H1 (cell line): ENCODE measurements at regions of chr1 and their contacts with region 1.

Region 1: GRCh38 chr1:156677616-156678596 is 699 bp upstream of the NES start:
- DNase-seq: peak in 1 of 2 experiments; percentile 74
- H3K4me3 ChIP-seq: peak overlapping the region; percentile 64 to 84 (median 74); a peak in 5 of 8 replicates
- H3K27ac ChIP-seq: no peak overlapping the region
- H3K4me1 ChIP-seq: peaks cover 7 to 37% (median 30%) of the 10 kb centered on the region in 4 experiments
- H3K27me3 ChIP-seq: no peaks in the 10 kb centered on the region; a peak in 2 of 7 replicates
- CTCF ChIP-seq: peak in 2 of 3 experiments; percentile 92 to 97; a peak in 3 of 4 replicates
- EP300 ChIP-seq: no peak
- POLR2A ChIP-seq: no peak
- RAD21 ChIP-seq: peak; percentile 89 to 95

Region 2: GRCh38 chr1:156618853-156619581 is 58.9 kb before region 1 on chr1 and contains the start of gene HAPLN2:
- CTCF ChIA-PET with region 1: interaction called, 868 read pairs
- POLR2A ChIA-PET with region 1: interaction called, 46 read pairs
- DNase-seq: peak in 1 of 2 experiments; percentile 84
- H3K4me3 ChIP-seq: peak within 1 kb of the TSS in 1 of 4 experiments; percentile 32; a peak in 2 of 8 replicates
- H3K27ac ChIP-seq: no peak within 1 kb of the TSS
- H3K4me1 ChIP-seq: no peaks in the 10 kb centered on the region; a peak in 2 of 7 replicates
- H3K27me3 ChIP-seq: peaks cover 14 to 34% (median 27%) of the 10 kb centered on the region in 4 experiments
- CTCF ChIP-seq: peak; percentile 72 to 94 (median 92)
- EP300 ChIP-seq: no peak
- POLR2A ChIP-seq: no peak
- RAD21 ChIP-seq: peak; percentile 44 to 53
- total RNA-seq, gene HAPLN2: 0.19 TPM in 1 of 2 replicates, not detected in the other

Region 3: DNA sequence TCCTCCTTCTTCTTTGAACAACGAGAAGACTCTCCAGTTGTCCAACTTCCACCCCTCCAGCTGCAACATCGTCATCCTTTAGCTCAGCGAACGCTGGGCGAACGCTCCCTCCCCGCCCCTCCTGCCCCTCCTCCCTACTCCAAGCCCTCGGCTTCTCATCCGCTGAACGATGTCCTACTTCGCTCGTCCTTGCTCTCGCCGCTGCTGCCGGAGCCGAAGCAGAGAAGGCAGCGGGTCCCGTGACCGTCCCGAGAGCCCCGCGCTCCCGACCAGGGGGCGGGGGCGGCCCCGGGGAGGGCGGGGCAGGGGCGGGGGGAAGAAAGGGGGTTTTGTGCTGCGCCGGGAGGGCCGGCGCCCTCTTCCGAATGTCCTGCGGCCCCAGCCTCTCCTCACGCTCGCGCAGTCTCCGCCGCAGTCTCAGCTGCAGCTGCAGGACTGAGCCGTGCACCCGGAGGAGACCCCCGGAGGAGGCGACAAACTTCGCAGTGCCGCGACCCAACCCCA is 36.1 kb before region 1 on chr1 and contains the start of gene BCAN:
- CTCF ChIA-PET with region 1: interaction called, 868 read pairs
- POLR2A ChIA-PET with region 1: interaction called, 22 read pairs
- DNase-seq: peak in 1 of 2 experiments; percentile 80
- H3K4me3 ChIP-seq: peak within 1 kb of the TSS; percentile 26 to 72 (median 53)
- H3K27ac ChIP-seq: no peak within 1 kb of the TSS
- H3K4me1 ChIP-seq: peaks cover 5 to 22% (median 15%) of the 10 kb centered on the region in 4 experiments
- H3K27me3 ChIP-seq: peaks cover 11 to 83% (median 63%) of the 10 kb centered on the region in 4 experiments
- CTCF ChIP-seq: no peak
- EP300 ChIP-seq: no peak
- POLR2A ChIP-seq: no peak
- RAD21 ChIP-seq: no peak
- total RNA-seq, gene BCAN: 3.8 and 4.5 TPM in 2 replicates

Region 4: DNA sequence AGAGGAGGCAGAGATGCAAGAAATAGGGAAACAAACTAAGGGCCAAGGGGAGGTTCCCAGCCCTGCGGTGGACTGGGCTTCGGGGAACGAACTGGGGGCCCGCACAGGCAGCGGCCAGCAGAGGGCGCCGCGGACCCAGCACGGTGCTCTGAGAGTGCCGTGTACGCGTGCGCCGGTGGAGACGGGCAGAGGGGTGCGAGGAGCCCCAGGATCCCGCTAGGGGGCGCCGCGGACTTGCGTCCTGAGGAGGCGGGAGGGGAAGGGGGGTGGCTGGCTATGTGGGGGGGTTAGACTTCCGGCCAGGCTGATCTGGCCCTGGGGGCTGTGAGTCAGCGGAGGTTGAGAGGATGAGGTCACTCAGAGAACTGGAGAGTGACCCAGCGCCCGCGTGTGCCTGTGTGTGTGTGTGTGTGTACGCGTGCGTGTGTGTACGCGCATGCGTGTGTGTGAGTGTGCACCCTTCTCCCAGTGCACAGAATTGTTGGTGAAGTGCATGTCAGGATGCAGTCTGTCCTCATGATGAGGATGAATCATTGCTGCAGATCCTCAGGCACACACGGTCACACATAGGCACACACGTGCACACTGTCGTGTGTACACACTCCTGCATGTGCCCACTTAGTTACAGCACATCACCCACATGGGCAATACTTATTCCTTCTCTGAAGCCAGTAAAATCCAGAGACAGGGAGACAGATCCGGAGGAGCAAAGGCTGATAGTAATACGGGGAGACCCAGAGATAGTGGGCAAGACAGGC is 17.7 kb before region 1 on chr1:
- CTCF ChIA-PET with region 1: interaction called, 4,284 read pairs
- POLR2A ChIA-PET with region 1: interaction called, 419 read pairs
- DNase-seq: peak; percentile 96 to 100
- H3K4me3 ChIP-seq: no peak overlapping the region
- H3K27ac ChIP-seq: peak overlapping the region; percentile 54; the same call in 1 of the 2 replicates
- H3K4me1 ChIP-seq: peaks cover 19 to 49% (median 43%) of the 10 kb centered on the region in 4 experiments
- H3K27me3 ChIP-seq: peaks cover 2 to 44% (median 33%) of the 10 kb centered on the region in 4 experiments
- CTCF ChIP-seq: peak in 2 of 3 experiments; percentile 97 to 99; a peak in 3 of 4 replicates
- EP300 ChIP-seq: peak in 1 of 2 experiments; percentile 71; a peak in 1 of 3 replicates
- POLR2A ChIP-seq: peak in 1 of 2 experiments; percentile 30; a peak in 1 of 3 replicates
- RAD21 ChIP-seq: peak; percentile 87 to 96

Region 5: GRCh38 chr1:156700736-156701531 is 23.0 kb after region 1 on chr1:
- CTCF ChIA-PET with region 1: interaction called, 4,284 read pairs
- POLR2A ChIA-PET with region 1: interaction called, 208 read pairs
- DNase-seq: no peak
- H3K4me3 ChIP-seq: no peak overlapping the region
- H3K27ac ChIP-seq: no peak overlapping the region
- H3K4me1 ChIP-seq: peaks cover 8 to 20% (median 13%) of the 10 kb centered on the region in 4 experiments
- H3K27me3 ChIP-seq: peaks cover 0 to 19% (median 8%) of the 10 kb centered on the region in 4 experiments; a peak in 4 of 7 replicates
- CTCF ChIP-seq: no peak
- EP300 ChIP-seq: no peak
- POLR2A ChIP-seq: no peak
- RAD21 ChIP-seq: no peak

Region 6: DNA sequence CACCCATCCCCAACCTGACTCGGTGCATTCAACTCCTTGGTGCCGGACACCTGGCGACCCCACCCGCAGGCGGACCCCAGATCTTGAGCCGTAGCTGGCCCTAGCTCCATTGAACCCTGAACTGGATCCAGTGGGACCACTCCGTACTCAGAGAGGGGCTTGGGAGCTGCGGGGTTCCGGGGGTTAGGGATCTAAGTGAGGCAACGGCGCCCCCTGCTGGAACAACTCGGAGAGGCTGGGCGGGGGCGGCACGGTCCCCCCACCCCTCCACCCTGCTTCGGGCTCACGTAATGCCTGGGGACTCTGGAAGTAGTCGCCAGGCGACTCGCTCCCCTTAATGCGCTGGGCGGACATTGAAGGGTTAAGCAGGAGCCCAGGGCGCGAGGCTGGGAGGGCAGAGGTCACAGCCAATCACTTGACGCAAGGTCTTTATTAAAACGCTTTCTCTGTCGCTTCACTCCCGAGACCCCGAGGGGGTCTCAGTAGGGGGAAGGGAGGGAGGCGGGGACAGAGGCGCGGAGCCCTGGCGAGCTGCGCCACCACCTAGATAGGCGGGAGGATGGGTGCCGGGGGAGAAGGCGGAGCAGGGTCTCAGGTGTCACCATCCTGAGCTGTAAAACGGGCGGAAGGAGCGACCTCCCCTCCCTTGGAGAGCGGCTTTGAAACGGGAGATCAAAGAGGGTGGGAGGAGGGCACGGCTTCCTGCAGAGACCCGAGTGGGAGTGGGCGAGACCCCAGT is 28.2 kb after region 1 on chr1:
- CTCF ChIA-PET with region 1: interaction called, 4,284 read pairs
- POLR2A ChIA-PET with region 1: interaction called, 71 read pairs
- DNase-seq: peak; percentile 86 to 98
- H3K4me3 ChIP-seq: peak overlapping the region; percentile 50 to 80 (median 70)
- H3K27ac ChIP-seq: peak overlapping the region; percentile 79
- H3K4me1 ChIP-seq: peaks cover 27 to 57% (median 45%) of the 10 kb centered on the region in 4 experiments
- H3K27me3 ChIP-seq: peaks cover 0 to 19% (median 8%) of the 10 kb centered on the region in 4 experiments; a peak in 4 of 7 replicates
- CTCF ChIP-seq: peak; percentile 72 to 86 (median 81)
- EP300 ChIP-seq: peak in 1 of 2 experiments; percentile 51; a peak in 1 of 3 replicates
- POLR2A ChIP-seq: no peak
- RAD21 ChIP-seq: peak; percentile 78 to 88

Region 7: DNA sequence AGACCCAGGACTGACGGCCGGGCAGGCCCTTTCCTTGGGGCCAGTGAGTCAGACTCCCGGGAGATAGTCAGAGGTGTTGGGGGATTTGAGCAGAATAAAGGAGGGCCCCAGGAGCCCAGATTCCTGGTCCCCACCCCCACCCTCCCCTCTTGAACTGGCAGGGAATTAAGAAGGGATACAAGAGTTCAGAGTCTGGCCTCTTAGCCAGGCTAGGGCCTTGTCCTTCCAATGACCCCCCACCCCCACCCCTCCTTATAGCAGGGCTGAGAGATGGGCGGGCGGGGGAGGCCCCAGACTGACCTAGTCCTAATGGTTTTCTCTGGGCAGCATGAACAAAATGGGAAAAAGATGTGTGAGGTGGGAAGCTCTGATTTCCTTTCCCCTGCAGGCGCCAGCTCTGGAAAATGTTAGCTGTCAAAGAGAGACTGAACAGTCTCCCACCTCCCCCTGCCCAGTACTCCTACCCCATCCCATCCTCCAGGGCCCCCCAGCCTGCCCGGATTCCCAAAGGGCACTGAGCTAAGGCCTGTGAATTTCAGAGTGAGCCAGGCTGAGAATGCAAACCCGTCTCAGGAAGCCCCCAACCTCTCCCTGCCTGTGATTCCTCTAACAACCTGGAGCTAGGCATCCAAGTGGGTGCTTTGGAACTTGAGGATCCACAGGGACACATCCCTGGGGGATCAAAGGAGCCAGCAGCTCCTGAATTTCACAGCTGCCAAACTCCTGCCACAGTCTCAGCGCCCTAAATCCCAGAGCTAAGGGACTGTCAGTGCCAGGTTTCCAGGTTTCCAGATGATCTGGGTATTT is 33.3 kb after region 1 on chr1:
- CTCF ChIA-PET with region 1: interaction called, 4,284 read pairs
- POLR2A ChIA-PET with region 1: interaction called, 71 read pairs
- DNase-seq: peak in 1 of 2 experiments; percentile 51
- H3K4me3 ChIP-seq: peak overlapping the region in 2 of 4 experiments; percentile 2 to 18; a peak in 3 of 8 replicates
- H3K27ac ChIP-seq: no peak overlapping the region
- H3K4me1 ChIP-seq: peaks cover 18 to 48% (median 37%) of the 10 kb centered on the region in 4 experiments
- H3K27me3 ChIP-seq: no peaks in the 10 kb centered on the region
- CTCF ChIP-seq: no peak
- EP300 ChIP-seq: no peak
- POLR2A ChIP-seq: no peak
- RAD21 ChIP-seq: no peak; a peak in 1 of 4 replicates